ENCODE measurements at regions of chr1 and their contacts with region 1.

Region 1: DNA sequence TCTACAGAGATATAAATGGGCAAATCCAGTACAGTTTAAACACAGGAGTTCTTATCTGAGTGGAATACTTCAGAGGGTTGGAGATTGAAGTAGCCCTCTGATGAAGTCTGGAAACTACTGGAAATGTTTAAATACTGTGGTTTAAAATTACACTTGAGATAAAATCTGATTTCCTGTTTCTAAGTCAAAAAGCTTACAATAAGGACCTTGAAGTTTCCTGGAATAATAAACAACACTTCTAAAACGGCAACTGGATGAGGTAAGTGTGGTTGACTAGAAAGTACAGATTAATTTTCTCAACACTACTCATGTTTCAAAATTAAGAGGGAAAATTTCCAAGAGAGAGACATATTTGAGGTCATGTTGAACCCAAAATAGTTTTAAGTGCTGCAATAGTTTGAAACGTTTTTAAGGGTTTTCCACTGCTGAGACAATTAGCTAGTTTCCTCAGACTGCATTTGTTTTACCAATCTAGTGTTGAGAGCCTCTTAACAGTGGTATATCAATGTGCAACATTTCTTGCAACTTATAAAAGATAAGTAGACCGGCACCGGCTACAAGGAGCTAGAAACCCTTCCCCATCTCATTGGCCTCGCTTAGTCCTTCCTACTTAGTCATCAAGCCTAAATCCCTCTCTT is 27.4 kb downstream of the KCNA3 start:
- DNase-seq: peak; percentile 88
- H3K4me3 ChIP-seq: no peak overlapping the region
- H3K27ac ChIP-seq: peak overlapping the region; percentile 56
- H3K4me1 ChIP-seq: peaks cover 52% of the 10 kb centered on the region
- H3K27me3 ChIP-seq: peaks cover 18% of the 10 kb centered on the region
- CTCF ChIP-seq: no peak

Region 2: DNA sequence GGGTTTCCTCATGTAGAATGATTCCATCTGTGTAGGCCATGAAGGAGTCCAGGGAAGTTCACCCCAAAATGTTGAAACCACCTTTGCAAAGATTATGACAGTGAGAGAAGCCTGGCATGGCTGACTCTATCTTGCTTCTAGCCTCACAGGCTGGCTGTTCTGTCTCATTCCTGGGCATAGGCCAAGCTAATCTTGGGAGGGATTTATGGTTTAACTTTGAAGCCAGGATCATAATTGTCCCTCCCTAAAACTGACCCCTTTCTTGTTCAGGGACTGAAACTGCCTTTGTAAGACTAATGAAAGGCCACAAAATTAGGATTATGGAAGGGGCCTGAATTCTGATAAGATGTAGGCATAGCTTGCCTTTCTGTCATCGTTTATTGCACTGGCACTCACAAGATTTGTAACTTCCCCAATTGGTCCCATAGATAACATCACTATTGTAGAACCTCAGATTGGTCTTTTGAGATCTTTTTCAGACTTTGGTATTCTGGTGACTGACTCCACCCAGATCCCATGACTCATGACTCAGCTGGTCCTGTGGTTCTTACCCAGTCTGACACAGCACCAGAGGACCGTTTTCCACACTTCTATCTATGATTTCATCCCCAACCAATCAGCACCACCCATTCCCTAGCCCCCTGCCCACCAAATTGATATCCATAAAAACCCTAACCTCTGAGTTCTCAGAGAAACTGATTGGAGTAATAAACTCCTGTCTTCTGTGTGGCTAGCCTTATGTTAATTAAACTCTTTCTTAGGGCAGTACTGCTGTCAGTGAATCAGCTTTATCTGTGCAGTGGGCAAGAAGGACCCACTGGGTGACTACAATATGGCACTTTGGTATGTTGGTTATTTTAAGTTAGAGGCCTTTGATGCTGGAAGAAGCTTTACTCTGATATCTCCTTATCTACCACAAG is 226.2 kb before region 1 on chr1:
- CTCF ChIA-PET with region 1: no interaction called
- POLR2A ChIA-PET with region 1: no interaction called
- intact Hi-C with region 1: no loop called
- DNase-seq: no peak
- H3K4me3 ChIP-seq: no peak overlapping the region
- H3K27ac ChIP-seq: no peak overlapping the region
- H3K4me1 ChIP-seq: no peaks in the 10 kb centered on the region
- H3K27me3 ChIP-seq: peaks cover 46% of the 10 kb centered on the region
- CTCF ChIP-seq: no peak

Region 3: DNA sequence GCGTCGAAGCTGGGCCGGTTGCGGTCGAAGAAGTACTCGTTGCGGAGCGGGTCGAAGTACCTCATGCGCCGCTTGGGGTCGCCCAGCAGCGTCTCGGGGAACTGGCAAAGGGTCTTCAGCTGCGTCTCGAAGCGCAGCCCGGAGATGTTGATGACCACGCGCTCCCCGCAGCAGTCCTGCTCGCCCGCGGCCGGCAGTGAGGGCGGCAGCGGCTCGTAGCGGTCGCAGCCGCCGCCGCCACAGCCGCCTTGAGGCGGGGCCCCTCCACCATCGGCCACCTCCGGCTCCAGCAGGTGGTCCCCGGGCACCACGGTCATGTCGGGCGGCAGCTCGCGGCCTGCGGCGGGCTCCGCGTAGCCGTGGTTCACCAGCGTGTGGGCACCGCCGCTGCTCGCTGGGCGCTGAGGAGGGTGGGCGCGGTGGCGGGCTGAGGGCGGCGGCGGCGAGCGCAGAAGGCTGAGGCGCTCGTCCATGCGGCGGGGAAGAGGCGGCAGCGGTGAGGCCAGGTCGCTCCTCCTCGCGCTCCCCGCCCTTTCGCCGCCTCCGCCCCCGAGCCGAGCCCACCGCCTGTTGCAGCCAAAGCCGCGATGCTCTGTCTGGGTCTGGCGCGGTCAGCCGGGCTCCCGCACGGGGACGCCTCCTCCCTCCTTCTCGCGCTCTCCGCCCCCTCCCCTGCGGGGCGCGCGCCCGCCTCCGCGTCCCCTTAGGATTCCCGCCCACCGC is 27.1 kb after region 1 on chr1 and contains the start of gene KCNA3:
- CTCF ChIA-PET with region 1: no interaction called
- POLR2A ChIA-PET with region 1: no interaction called
- intact Hi-C with region 1: loop called (anchors 1 kb)
- DNase-seq: peak; percentile 54
- H3K4me3 ChIP-seq: peak within 1 kb of the TSS; percentile 50
- H3K27ac ChIP-seq: no peak within 1 kb of the TSS
- H3K4me1 ChIP-seq: no peaks in the 10 kb centered on the region
- H3K27me3 ChIP-seq: peaks cover 73% of the 10 kb centered on the region
- CTCF ChIP-seq: peak; percentile 29; the same call in 1 of the 2 replicates
- total RNA-seq, gene KCNA3: 0.15 and 0.43 TPM in 2 replicates

Region 4: GRCh38 chr1:110718452-110718851 is 71.1 kb after region 1 on chr1:
- CTCF ChIA-PET with region 1: no interaction called
- POLR2A ChIA-PET with region 1: no interaction called
- intact Hi-C with region 1: no loop called
- DNase-seq: no peak
- H3K4me3 ChIP-seq: no peak overlapping the region
- H3K27ac ChIP-seq: no peak overlapping the region
- H3K4me1 ChIP-seq: no peaks in the 10 kb centered on the region
- H3K27me3 ChIP-seq: peaks cover 75% of the 10 kb centered on the region
- CTCF ChIP-seq: no peak